Activated T-helper 2 cell treated with anti-CD3 and anti-CD28 coated beads, Interferon-gamma antibody, Interleukin-2, Interleukin-4, amounts not matched to agents 10 μg/mL and 5 μg/mL and 100 μg/mL, durations not matched to agents 14 hours and 24 hours and 36 hours (primary cell): ENCODE measurements at regions of chr6 and their contacts with region 1.

Region 1: DNA sequence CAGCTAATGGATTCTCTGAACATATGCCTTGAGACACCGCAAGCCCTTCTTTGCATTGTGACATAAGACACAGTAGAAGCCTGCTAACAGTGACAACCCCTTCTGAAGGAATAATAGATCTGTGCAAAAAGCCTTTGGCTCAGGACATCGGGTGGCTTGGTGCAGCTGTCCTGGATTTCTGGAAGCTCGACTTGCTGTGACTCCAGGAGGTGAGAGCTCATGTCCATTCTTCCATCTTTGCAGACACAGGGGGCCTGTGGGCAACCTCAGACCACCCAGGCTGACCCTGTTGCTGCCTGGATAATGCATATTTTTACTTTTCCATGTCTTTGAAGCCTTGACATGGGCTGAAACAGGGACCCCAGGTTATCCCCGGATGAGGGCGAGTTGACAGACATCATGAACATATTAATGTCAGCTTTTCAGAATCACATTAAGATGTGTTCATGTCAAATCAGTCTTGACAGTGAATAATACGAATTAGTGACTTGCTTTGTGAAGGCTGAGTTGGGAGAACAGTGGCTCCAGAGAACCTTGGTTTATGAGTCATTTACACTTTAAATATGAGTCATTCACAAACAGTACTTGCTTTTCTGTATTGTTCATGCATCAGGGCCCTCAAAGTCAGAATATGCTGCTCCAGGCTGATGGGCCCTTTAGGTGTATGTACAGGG is 66.8 kb upstream of the IYD start:
- DNase-seq: no peak
- H3K4me3 Mint-ChIP-seq: no peak overlapping the region
- H3K27ac Mint-ChIP-seq: no peak overlapping the region
- H3K4me1 Mint-ChIP-seq: peaks cover 10% of the 10 kb centered on the region
- H3K27me3 Mint-ChIP-seq: peaks cover 5% of the 10 kb centered on the region

Region 2: DNA sequence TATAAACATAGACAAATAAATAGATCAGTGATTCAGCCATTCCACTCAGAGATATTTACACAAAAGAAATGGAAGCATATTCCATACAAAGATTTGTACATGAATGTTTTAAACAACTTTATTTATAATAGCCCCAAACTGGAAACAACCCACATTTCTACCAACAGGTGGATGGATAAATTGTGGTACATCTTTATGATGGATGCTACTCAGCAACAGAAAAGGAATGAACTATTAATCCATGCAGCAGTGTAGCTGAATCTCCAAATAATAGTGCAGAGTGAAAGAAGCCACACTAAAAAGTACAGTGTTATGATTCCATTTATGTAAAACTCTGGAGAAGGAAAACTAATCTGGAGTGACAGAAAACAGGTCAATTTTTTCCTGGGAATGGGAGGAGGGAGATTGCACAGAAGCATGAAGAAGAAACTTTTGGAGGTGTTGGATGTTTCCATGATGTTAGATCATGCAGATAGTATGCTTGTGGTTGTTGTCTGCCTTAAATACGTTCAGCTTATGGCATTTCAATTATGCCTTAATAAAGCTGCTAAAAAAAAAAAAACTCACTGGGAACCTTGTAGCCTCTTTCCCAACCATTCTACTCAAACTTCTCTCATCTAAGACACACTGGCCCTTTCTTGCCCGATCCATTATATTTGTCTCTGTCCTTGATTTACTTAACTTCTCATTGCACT is 58.2 kb before region 1 on chr6:
- intact Hi-C with region 1: loop called (anchors 5 kb)
- DNase-seq: no peak
- H3K4me3 Mint-ChIP-seq: no peak overlapping the region
- H3K27ac Mint-ChIP-seq: no peak overlapping the region
- H3K4me1 Mint-ChIP-seq: peaks cover 28% of the 10 kb centered on the region
- H3K27me3 Mint-ChIP-seq: peaks cover 3% of the 10 kb centered on the region

Region 3: DNA sequence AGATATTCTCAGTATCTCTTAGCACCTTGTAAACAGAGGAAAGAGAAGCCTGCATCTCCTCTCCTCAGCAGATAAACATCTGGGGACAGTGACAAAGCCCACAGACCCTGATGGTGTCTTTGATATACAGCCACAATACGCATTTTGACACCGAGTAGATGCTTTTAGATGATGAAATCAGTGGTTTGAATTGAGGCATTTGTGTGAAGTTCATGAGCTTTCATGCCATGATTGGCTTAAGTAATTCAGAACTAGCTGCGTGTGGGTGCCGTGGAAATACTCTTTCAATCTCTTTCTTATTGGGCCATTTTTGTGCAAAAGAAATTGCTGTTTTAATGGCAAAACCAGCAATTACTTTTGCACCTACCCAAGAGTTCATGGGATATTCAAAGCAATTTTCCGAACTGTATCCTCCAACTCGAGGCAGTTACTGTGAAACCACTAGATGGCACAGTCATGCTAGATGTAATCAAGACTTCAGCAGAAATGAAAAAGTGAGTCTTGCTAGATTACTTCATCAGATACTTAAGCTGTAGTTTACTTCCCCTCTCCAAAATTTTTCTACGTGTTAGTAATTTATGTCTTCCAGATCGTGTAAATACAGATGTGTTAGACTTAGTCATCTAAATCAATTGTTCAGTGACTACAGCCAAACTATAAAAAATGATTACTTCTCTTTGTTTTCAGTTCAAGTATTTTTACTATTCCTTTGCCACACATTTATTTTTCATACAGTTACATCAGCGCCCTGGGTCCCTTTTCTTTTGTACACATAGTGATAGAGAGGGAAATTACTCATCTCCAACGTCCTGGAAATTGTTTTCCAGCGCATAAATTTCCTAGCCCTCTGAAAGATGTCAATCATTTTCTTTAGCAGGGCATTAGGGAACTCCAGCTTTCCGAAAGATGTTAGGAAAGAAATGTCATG is 116.2 kb after region 1 on chr6:
- intact Hi-C with region 1: no loop called
- DNase-seq: peak; percentile 26
- H3K4me3 Mint-ChIP-seq: peak overlapping the region; percentile 72
- H3K27ac Mint-ChIP-seq: peak overlapping the region; percentile 80
- H3K4me1 Mint-ChIP-seq: peaks cover 47% of the 10 kb centered on the region
- H3K27me3 Mint-ChIP-seq: peaks cover 33% of the 10 kb centered on the region

Region 4: GRCh38 chr6:150466196-150466595 is 164.2 kb after region 1 on chr6:
- intact Hi-C with region 1: no loop called
- DNase-seq: no peak
- H3K4me3 Mint-ChIP-seq: no peak overlapping the region
- H3K27ac Mint-ChIP-seq: no peak overlapping the region
- H3K4me1 Mint-ChIP-seq: no peaks in the 10 kb centered on the region
- H3K27me3 Mint-ChIP-seq: peaks cover 9% of the 10 kb centered on the region

Region 5: DNA sequence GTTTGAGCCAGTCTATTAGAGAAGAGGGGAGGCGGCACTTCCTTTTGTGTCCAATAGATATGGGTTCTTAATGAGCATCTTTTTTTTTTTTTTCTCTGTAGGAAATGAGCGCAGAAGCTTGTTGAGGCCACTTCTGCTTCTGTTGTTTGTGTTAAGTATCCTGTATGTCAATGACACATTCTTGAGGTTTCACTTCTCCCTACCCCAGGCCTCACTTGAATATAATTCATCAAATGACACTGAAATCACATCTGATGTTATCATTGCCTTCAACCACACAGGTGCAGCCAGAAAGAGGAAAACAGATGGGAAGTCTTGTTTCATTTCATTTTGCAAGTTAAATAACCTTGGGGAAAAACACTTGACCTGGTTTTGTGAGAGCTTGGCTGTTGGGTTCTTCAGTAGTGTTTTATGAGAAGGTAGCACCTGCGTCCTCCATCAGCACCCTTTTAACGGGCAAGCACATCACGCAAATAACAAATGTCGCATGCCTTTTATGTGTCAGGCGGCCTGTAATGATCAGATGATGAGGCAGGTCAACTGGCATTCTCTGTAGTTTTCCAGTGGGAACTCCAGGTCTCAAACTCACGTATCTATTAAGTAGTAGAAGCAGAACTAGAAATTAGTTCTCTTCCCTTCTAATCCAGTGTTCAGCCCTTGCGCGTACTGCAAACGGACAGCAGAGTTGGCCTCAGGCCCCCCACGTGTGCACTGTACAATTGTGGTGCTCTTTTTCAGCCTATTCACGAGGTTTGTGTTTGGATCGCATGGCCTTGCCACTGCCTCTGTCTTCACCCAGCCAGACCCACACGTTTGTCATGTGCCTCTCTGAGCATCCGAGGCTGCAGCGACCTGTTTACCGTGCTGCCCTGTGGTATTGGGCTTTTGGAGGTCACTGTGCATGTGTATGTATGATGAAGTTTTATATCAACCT is 321.2 kb after region 1 on chr6:
- intact Hi-C with region 1: no loop called
- DNase-seq: no peak
- H3K4me3 Mint-ChIP-seq: no peak overlapping the region
- H3K27ac Mint-ChIP-seq: no peak overlapping the region
- H3K4me1 Mint-ChIP-seq: peaks cover 8% of the 10 kb centered on the region
- H3K27me3 Mint-ChIP-seq: peaks cover 35% of the 10 kb centered on the region